ENCODE measurements at regions of chr15 and their contacts with region 1.

Region 1: DNA sequence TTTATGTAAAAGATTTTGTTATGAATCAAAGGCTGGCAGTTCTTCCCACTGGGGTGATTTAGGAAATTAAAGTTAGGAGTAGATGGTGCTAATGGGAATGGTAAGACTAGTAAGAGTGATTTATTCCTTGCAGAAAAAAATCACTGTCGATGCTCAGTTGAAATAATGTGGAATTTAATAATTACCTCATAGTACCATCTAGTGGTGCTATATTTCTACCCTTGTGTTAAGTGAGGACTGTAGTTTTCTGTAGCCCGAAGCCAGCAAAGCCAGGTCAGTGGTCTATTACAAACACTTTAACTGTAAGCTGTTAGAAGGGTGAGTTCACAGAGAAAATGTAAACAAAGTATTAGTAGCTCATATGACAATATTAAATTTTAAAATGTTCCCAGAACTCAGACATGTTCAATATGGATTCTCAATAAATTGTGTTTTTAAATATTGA is 39.5 kb upstream of the GOLGA8J start:
- DNase-seq: no peak
- ATAC-seq: peak in 1 of 8 donors; percentile 23
- H3K4me3 ChIP-seq: no peak overlapping the region
- H3K27ac ChIP-seq: no peak overlapping the region
- H3K4me1 ChIP-seq: peaks cover 0 to 8% (median 0%) of the 10 kb centered on the region in 9 donors
- H3K27me3 ChIP-seq: peaks cover 0 to 26% (median 5%) of the 10 kb centered on the region in 7 donors
- CTCF ChIP-seq: peak in 7 of 9 donors; percentile 26 to 57 (median 44)

Region 2: DNA sequence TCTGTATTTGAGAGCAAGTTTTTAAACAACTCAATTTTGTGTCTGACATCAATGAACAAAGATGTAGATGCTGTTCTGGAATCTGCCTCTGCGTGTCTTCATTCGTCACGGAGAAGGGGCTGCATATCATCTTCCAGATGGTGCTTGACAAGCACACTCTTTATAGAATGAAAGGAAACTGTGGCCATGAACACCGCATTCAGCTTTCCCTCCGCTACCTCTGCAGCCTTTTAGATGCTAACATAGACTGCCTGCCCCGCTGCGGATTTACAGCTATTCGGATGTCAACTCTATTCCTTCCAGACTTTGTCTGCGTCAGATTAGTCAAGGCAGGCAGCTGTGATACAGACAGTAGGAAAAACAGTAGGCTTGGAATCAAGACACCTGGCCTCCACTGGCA is 453.8 kb before region 1 on chr15:
- intact Hi-C with region 1: no loop called
- DNase-seq: no peak
- ATAC-seq: no peak
- H3K4me3 ChIP-seq: no peak overlapping the region
- H3K27ac ChIP-seq: no peak overlapping the region
- H3K4me1 ChIP-seq: no peaks in the 10 kb centered on the region
- H3K27me3 ChIP-seq: peaks cover 0 to 18% (median 4%) of the 10 kb centered on the region in 7 donors
- CTCF ChIP-seq: no peak

Region 3: GRCh38 chr15:29668120-29668602 is 375.1 kb before region 1 on chr15:
- intact Hi-C with region 1: loop called in 3 of 10 experiments (anchors 5 to 10 kb)
- DNase-seq: peak; percentile 48 to 74
- ATAC-seq: peak; percentile 73 to 95 (median 92)
- H3K4me3 ChIP-seq: no peak overlapping the region
- H3K27ac ChIP-seq: no peak overlapping the region
- H3K4me1 ChIP-seq: peaks cover 0 to 7% (median 0%) of the 10 kb centered on the region in 9 donors
- H3K27me3 ChIP-seq: peaks cover 0 to 18% (median 0%) of the 10 kb centered on the region in 7 donors
- CTCF ChIP-seq: peak; percentile 68 to 90 (median 78)

Region 4: GRCh38 chr15:29859973-29860715 is 183.1 kb before region 1 on chr15:
- intact Hi-C with region 1: no loop called
- DNase-seq: no peak
- ATAC-seq: peak in 1 of 8 donors; percentile 15
- H3K4me3 ChIP-seq: no peak overlapping the region
- H3K27ac ChIP-seq: peak overlapping the region in 9 of 10 donors; percentile 2 to 77 (median 49)
- H3K4me1 ChIP-seq: peaks cover 4 to 48% (median 14%) of the 10 kb centered on the region in 9 donors
- H3K27me3 ChIP-seq: no peaks in the 10 kb centered on the region
- CTCF ChIP-seq: no peak

Region 5: GRCh38 chr15:29942143-29942542 is 101.1 kb before region 1 on chr15:
- intact Hi-C with region 1: loop called in 5 of 10 experiments (anchors 5 to 10 kb)
- DNase-seq: no peak
- ATAC-seq: peak in 1 of 8 donors; percentile 49
- H3K4me3 ChIP-seq: no peak overlapping the region
- H3K27ac ChIP-seq: no peak overlapping the region
- H3K4me1 ChIP-seq: peaks cover 0 to 1% (median 0%) of the 10 kb centered on the region in 9 donors
- H3K27me3 ChIP-seq: no peaks in the 10 kb centered on the region
- CTCF ChIP-seq: peak in 8 of 9 donors; percentile 11 to 51 (median 34)

Region 6: DNA sequence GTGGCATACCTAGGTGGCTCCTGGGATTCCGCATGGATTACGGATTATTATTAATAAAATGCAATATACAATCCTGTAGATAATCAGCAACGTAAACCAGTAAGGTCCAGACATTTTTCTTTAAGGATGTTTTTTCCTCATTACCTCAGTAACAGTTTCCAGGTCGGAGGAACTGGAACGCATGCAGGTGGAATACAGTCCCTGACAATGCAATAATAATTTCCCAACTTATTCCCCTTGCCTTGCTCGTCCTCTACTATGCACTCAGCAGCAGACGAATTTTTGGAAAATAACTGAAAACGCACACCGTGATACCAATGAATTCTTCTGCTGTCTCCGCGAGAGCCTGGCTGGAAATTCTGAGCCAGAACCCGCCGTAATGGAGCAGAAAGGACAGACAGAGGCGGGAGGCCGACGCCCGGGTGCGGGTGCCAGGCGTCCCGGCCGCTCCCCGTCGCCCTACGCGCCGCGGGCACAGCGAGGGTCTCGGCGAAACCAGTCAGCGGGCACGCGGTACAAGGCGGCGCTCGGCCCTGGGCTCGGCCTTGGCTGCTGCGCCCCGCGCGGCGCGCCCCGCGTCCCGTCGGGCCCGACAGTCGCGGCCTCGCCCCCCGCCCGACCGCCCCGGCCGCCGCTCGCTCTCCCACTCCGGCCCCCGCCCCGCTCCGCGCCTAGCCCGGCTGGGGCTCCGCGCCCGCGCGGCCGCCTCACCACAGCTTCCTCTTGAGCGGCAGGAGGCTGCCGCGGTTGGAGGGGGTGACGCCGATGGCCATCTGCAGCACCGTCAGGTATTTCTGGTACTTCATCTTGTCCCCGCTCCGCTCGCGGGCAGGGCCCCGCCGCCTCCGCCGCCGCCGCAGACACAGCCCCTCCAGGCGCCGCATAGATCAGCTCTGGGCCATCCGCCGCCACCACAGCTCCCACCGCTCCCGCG is 75.0 kb before region 1 on chr15:
- intact Hi-C with region 1: no loop called
- DNase-seq: no peak
- ATAC-seq: peak in 1 of 8 donors; percentile 67
- H3K4me3 ChIP-seq: peak overlapping the region in 9 of 10 donors; percentile 29 to 49 (median 41)
- H3K27ac ChIP-seq: no peak overlapping the region
- H3K4me1 ChIP-seq: peaks cover 0 to 4% (median 0%) of the 10 kb centered on the region in 9 donors
- H3K27me3 ChIP-seq: peaks cover 0 to 70% (median 31%) of the 10 kb centered on the region in 7 donors
- CTCF ChIP-seq: no peak

Region 7: GRCh38 chr15:29988689-29989088 is 54.5 kb before region 1 on chr15:
- intact Hi-C with region 1: loop called in 1 of 10 experiments (anchors 10 kb)
- DNase-seq: no peak
- ATAC-seq: peak in 2 of 8 donors; percentile 79 to 84
- H3K4me3 ChIP-seq: no peak overlapping the region
- H3K27ac ChIP-seq: no peak overlapping the region
- H3K4me1 ChIP-seq: peaks cover 0 to 17% (median 6%) of the 10 kb centered on the region in 9 donors
- H3K27me3 ChIP-seq: peaks cover 0 to 15% (median 0%) of the 10 kb centered on the region in 7 donors
- CTCF ChIP-seq: no peak

Measured in heart right ventricle (tissue), 16 donors.